ENCODE measurements at regions of chr18 and their contacts with region 1.

Region 1: GRCh38 chr18:31197676-31198075 is 35.0 kb upstream of the DSC1 start:
- DNase-seq: peak; percentile 69
- H3K4me3 Mint-ChIP-seq: no peak overlapping the region
- H3K27ac Mint-ChIP-seq: no peak overlapping the region
- H3K4me1 Mint-ChIP-seq: peaks cover 20% of the 10 kb centered on the region
- H3K27me3 Mint-ChIP-seq: no peaks in the 10 kb centered on the region
- CTCF ChIP-seq: no peak

Region 2: DNA sequence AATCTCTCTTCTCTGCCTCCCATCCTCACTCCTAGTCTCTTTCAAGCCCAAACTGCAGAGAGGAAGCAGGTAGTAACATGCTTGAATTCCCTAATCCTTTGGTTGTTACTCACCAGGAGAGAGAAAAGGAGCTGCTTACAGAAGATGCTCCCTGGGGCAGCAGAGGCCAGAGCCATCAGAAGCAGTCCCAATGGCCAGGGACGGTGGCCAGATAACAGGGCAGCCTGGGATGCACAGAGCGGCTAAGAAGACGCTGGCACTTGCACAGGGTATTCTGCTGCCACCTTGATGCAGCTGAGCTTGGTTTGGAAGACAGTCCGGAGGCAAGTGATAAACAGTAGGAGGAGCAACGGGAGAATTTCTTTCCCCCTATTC is 35.3 kb before region 1 on chr18:
- CTCF ChIA-PET with region 1: interaction called, 4 read pairs
- POLR2A ChIA-PET with region 1: interaction called, 12 read pairs
- intact Hi-C with region 1: no loop called
- DNase-seq: peak; percentile 11
- H3K4me3 Mint-ChIP-seq: no peak overlapping the region
- H3K27ac Mint-ChIP-seq: no peak overlapping the region
- H3K4me1 Mint-ChIP-seq: peaks cover 14% of the 10 kb centered on the region
- H3K27me3 Mint-ChIP-seq: no peaks in the 10 kb centered on the region
- CTCF ChIP-seq: no peak

Measured in MCF 10A (cell line).